ENCODE measurements at regions of chr22 and their contacts with region 1.

Region 1: GRCh38 chr22:41381329-41382097 is at the start of gene TEF:
- DNase-seq: peak; percentile 98
- ATAC-seq: peak; percentile 81
- H3K4me3 ChIP-seq: peak within 1 kb of the TSS; percentile 56 to 93 (median 70)
- H3K4me3 Mint-ChIP-seq: peak within 1 kb of the TSS; percentile 88
- H3K27ac ChIP-seq: peak within 1 kb of the TSS; percentile 93 to 95
- H3K27ac Mint-ChIP-seq: peak within 1 kb of the TSS; percentile 99
- H3K4me1 ChIP-seq: peaks cover 10 to 18% of the 10 kb centered on the region in 2 donors
- H3K4me1 Mint-ChIP-seq: peaks cover 20% of the 10 kb centered on the region
- H3K27me3 ChIP-seq: no peaks in the 10 kb centered on the region
- H3K27me3 Mint-ChIP-seq: no peaks in the 10 kb centered on the region
- CTCF ChIP-seq: no peak
- total RNA-seq, gene TEF: 5.5 and 6.8 TPM in 2 replicates

Region 2: DNA sequence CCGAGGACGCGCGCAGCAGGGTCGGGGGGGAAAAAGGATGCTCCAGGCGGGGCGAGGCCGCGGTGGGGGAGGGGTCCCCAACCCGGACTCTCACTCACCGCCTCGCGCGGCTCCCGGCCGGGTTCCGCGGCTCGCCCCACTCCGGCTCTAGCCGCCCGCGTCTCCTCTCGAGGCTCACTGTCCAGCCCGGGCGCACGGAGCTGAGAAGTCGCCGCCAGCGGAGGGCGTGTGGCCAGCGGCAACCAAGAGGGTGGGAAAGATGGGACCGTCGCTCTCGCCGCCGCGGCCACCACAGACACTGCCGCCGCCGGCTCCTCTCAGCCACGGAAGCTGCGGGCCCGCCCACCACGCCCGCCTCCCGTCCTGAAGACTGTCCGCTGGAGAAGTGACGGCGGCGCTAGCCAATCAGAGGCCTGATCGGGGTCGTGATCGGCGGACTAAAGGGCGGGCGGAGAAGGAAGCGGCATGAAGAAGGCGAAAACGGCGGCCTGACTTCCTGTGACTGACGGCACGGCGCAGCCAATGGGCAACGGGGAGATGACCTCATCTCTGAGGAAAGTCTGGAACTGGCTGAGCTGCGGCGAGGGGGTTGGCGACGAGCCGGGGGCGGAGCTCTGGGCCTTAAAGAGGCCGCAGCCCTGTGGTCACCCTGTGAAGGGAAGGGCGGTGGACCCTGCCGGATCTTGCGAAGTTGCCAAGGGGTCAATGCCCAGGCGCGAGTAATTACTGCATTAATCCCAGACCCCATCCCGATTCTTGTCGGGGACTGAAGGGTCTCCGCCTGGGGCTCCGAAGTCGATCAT is 744.9 kb before region 1 on chr22 and contains the start of gene MRTFA:
- CTCF ChIA-PET with region 1: no interaction called
- POLR2A ChIA-PET with region 1: no interaction called
- intact Hi-C with region 1: loop called (anchors 2 kb)
- DNase-seq: peak; percentile 99
- ATAC-seq: peak; percentile 90
- H3K4me3 ChIP-seq: peak within 1 kb of the TSS; percentile 81 to 99 (median 96)
- H3K4me3 Mint-ChIP-seq: peak within 1 kb of the TSS; percentile 98
- H3K27ac ChIP-seq: peak within 1 kb of the TSS; percentile 84 to 92
- H3K27ac Mint-ChIP-seq: peak within 1 kb of the TSS; percentile 97
- H3K4me1 ChIP-seq: peaks cover 24 to 30% of the 10 kb centered on the region in 2 donors
- H3K4me1 Mint-ChIP-seq: peaks cover 39% of the 10 kb centered on the region
- H3K27me3 ChIP-seq: no peaks in the 10 kb centered on the region
- H3K27me3 Mint-ChIP-seq: no peaks in the 10 kb centered on the region
- CTCF ChIP-seq: no peak
- total RNA-seq, gene MRTFA: 82.6 and 87.6 TPM in 2 replicates

Region 3: DNA sequence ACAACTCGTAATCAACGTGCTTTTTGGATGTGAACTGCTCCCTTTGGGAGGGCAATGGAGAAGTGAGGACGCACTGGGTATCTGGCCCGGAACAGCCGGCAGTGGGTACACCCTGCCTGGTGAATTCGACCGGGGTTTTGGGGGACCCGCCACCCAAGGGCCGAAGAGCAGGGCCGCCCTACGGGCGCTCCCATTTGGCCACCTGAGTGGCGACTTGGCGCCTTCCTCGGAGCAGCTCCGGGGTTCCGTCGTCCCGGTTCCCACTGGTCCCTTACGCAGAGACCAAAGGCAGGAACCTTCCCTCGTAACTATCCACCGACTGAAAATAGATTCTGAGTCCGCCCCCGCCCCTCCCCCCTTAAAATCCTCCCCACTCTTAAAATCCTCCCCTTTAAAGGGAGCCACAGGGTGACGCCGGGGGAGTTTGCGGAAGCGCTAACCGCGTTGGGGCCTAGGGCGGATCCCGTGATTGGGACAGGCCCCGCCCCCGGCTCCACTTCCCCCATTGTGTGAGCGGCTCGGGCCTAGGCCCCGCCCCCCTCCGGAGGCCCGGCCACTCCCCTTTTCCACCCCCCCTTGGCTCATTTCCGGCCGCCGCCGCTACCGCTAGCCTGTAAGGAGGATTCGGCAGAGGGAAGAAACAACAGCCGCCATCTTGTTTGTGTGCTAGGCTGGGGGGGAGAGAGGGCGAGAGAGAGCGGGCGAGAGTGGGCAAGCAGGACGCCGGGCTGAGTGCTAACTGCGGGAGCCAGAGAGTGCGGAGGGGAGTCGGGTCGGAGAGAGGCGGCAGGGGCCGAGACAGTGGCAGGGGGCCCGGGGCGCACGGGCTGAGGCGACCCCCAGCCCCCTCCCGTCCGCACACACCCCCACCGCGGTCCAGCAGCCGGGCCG is 290.1 kb before region 1 on chr22:
- CTCF ChIA-PET with region 1: no interaction called
- POLR2A ChIA-PET with region 1: no interaction called
- intact Hi-C with region 1: loop called (anchors 1 kb)
- DNase-seq: peak; percentile 99
- ATAC-seq: peak; percentile 81
- H3K4me3 ChIP-seq: peak overlapping the region; percentile 74 to 100 (median 92)
- H3K4me3 Mint-ChIP-seq: peak overlapping the region; percentile 98
- H3K27ac ChIP-seq: peak overlapping the region; percentile 97 to 99
- H3K27ac Mint-ChIP-seq: peak overlapping the region; percentile 100
- H3K4me1 ChIP-seq: peaks cover 25% of the 10 kb centered on the region in 2 donors
- H3K4me1 Mint-ChIP-seq: peaks cover 32% of the 10 kb centered on the region
- H3K27me3 ChIP-seq: no peaks in the 10 kb centered on the region
- H3K27me3 Mint-ChIP-seq: no peaks in the 10 kb centered on the region
- CTCF ChIP-seq: no peak

Region 4: GRCh38 chr22:41301105-41302020 is 80.2 kb before region 1 on chr22 and contains the start of gene ZC3H7B:
- CTCF ChIA-PET with region 1: no interaction called
- POLR2A ChIA-PET with region 1: interaction called, 12 read pairs
- intact Hi-C with region 1: loop called (anchors 5 kb)
- DNase-seq: peak; percentile 94
- ATAC-seq: peak; percentile 92
- H3K4me3 ChIP-seq: peak within 1 kb of the TSS; percentile 59 to 95 (median 86)
- H3K4me3 Mint-ChIP-seq: peak within 1 kb of the TSS; percentile 86
- H3K27ac ChIP-seq: peak within 1 kb of the TSS; percentile 73 to 84
- H3K27ac Mint-ChIP-seq: peak within 1 kb of the TSS; percentile 75
- H3K4me1 ChIP-seq: peaks cover 13 to 17% of the 10 kb centered on the region in 2 donors
- H3K4me1 Mint-ChIP-seq: peaks cover 28% of the 10 kb centered on the region
- H3K27me3 ChIP-seq: no peaks in the 10 kb centered on the region
- H3K27me3 Mint-ChIP-seq: no peaks in the 10 kb centered on the region
- CTCF ChIP-seq: peak; percentile 51
- total RNA-seq, gene ZC3H7B: 41.9 and 42.2 TPM in 2 replicates

Region 5: GRCh38 chr22:41448189-41448808 is 66.8 kb after region 1 on chr22:
- CTCF ChIA-PET with region 1: no interaction called
- POLR2A ChIA-PET with region 1: interaction called, 36 read pairs
- intact Hi-C with region 1: no loop called
- DNase-seq: peak; percentile 96
- ATAC-seq: peak; percentile 60
- H3K4me3 ChIP-seq: peak overlapping the region; percentile 90 to 99 (median 97)
- H3K4me3 Mint-ChIP-seq: peak overlapping the region; percentile 99
- H3K27ac ChIP-seq: peak overlapping the region; percentile 97 to 98
- H3K27ac Mint-ChIP-seq: peak overlapping the region; percentile 94
- H3K4me1 ChIP-seq: peaks cover 8 to 25% of the 10 kb centered on the region in 2 donors
- H3K4me1 Mint-ChIP-seq: peaks cover 28% of the 10 kb centered on the region
- H3K27me3 ChIP-seq: no peaks in the 10 kb centered on the region
- H3K27me3 Mint-ChIP-seq: no peaks in the 10 kb centered on the region
- CTCF ChIP-seq: no peak

Region 6: GRCh38 chr22:41589391-41590241 is 208.1 kb after region 1 on chr22 and contains the start of gene PMM1:
- CTCF ChIA-PET with region 1: interaction called, 4 read pairs
- POLR2A ChIA-PET with region 1: interaction called, 3 read pairs
- intact Hi-C with region 1: loop called (anchors 1 kb)
- DNase-seq: peak; percentile 100
- ATAC-seq: peak; percentile 97
- H3K4me3 ChIP-seq: peak within 1 kb of the TSS; percentile 19 to 81 (median 73)
- H3K4me3 Mint-ChIP-seq: peak within 1 kb of the TSS; percentile 96
- H3K27ac ChIP-seq: peak within 1 kb of the TSS in 1 of 2 donors; percentile 24
- H3K27ac Mint-ChIP-seq: peak within 1 kb of the TSS; percentile 87
- H3K4me1 ChIP-seq: peaks cover 6 to 18% of the 10 kb centered on the region in 2 donors
- H3K4me1 Mint-ChIP-seq: peaks cover 13% of the 10 kb centered on the region
- H3K27me3 ChIP-seq: no peaks in the 10 kb centered on the region
- H3K27me3 Mint-ChIP-seq: no peaks in the 10 kb centered on the region
- CTCF ChIP-seq: no peak
- total RNA-seq, gene PMM1: 22.1 and 23.3 TPM in 2 replicates

Region 7: GRCh38 chr22:41688365-41689211 is 307.1 kb after region 1 on chr22 and contains the start of gene SNU13:
- CTCF ChIA-PET with region 1: no interaction called
- POLR2A ChIA-PET with region 1: interaction called, 6 read pairs
- intact Hi-C with region 1: loop called (anchors 5 kb)
- DNase-seq: peak; percentile 96
- ATAC-seq: peak; percentile 91
- H3K4me3 ChIP-seq: peak within 1 kb of the TSS; percentile 74 to 99 (median 96)
- H3K4me3 Mint-ChIP-seq: peak within 1 kb of the TSS; percentile 91
- H3K27ac ChIP-seq: peak within 1 kb of the TSS; percentile 92 to 96
- H3K27ac Mint-ChIP-seq: peak within 1 kb of the TSS; percentile 97
- H3K4me1 ChIP-seq: peaks cover 10 to 23% of the 10 kb centered on the region in 2 donors
- H3K4me1 Mint-ChIP-seq: peaks cover 31% of the 10 kb centered on the region
- H3K27me3 ChIP-seq: no peaks in the 10 kb centered on the region
- H3K27me3 Mint-ChIP-seq: no peaks in the 10 kb centered on the region
- CTCF ChIP-seq: no peak
- total RNA-seq, gene SNU13: 108 and 114 TPM in 2 replicates

Measured in B cell (primary cell).